ENCODE measurements at regions of chr17 and their contacts with region 1.

Region 1: DNA sequence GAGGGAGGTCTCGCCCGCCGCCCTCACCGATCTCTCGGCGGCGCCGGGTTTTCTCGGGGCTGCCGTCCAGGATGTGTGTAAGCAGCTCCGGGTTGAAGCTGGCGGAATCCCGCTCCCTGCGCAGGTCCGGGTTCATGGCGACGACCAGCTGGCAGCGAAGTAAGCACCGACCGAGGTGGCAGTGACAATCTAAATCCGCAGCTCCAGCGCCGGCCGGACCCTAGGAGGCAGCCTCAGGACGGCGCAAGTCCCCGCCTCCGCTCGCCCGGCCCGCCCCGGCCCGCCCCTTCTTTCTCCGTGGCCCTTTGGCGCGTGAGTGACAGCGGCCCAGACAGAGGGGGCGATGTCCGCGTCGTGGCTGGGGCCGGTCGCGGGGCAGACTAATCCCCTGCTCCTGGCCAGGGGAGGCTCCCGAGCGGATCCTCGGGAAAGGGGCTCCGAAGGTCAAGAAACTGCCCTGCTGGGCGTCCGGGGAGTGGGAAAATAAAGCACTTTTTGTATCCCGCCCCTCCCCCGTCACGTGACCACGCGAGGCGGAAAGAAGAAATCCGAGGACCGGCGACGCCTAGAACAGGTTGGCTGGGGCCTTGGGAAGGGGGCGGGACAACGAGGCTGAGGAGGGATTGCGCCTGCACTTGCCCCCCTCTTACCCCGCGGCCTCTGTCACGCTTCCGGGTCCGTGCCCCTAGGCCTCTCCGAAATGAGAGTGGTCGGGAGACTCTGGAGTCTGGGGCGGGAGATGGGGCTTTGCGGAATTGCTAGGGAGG is at the starts of genes ACOX1 and TEN1:
- DNase-seq: peak; percentile 91 to 96
- H3K4me3 ChIP-seq: peak within 1 kb of the TSS; percentile 82
- H3K27ac ChIP-seq: peak within 1 kb of the TSS; percentile 87
- H3K4me1 ChIP-seq: peaks cover 63% of the 10 kb centered on the region
- H3K27me3 ChIP-seq: no peaks in the 10 kb centered on the region
- CTCF ChIP-seq: peak; percentile 21; the same call in 1 of the 2 replicates
- total RNA-seq, gene ACOX1: 35.5 and 37.1 TPM in 2 replicates
- total RNA-seq, gene TEN1: 19.6 and 22.7 TPM in 2 replicates

Region 2: DNA sequence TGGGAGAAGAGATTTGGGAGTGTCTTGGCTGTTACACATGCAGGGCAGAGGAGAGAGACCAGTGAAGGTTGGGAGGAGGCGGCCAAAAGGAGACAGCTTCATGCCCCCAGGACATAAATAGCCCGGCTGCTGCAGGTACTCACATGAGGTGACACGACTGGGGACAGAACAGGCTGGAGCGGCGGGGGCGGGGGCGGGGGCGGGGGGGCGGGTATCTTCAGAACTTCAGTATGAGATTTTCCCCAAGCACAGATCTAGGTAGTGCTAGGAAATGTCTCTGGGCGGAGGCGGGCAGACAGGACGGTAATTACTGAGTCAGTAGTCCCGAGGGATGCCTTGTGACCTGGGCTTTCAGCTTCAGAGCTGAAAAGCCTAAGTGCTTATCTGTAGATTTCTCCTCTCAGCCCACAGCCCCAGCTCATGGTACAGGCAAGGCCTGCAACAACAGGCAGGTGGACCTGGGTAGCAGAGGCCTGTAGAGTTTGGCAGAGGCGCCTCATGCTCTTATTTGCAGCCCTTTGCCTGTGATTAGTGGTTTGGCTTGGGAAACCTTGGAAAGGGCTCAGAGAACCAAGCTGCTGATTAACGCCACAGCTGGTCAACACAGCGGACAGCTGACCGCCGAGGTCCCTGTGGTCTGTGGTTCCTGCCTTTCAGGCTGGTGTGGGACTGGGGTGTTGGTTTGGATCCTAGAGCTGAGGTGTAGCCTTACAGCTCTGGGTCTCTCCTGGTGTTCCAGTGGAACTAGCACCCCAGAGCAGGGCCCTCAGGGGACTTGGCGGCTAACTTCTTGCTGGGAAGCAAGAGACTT is 170.0 kb before region 1 on chr17:
- CTCF ChIA-PET with region 1: no interaction called
- POLR2A ChIA-PET with region 1: no interaction called
- intact Hi-C with region 1: no loop called
- DNase-seq: no peak
- H3K4me3 ChIP-seq: no peak overlapping the region
- H3K27ac ChIP-seq: no peak overlapping the region
- H3K4me1 ChIP-seq: no peaks in the 10 kb centered on the region
- H3K27me3 ChIP-seq: no peaks in the 10 kb centered on the region
- CTCF ChIP-seq: no peak

Region 3: DNA sequence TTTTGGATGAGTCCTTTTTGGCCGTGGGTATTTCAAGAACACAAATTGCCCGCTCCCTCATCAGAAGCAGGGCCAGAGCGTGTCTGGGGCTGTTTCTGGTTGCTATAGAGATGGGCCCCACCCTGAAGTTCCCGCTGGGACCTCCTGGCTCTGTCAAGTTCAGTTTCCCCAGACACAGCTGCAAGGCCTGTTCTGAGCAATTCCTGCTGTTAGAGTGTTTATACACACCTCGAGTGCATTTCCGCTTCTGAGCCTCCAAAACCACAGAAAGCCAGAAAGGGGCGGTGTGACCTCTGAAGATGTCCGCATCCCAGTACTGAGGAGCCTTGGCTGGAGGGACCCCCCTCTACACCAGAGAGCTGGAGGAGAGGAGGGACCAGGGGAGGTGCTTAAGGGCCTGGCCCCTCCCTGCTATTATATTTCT is 114.7 kb before region 1 on chr17:
- CTCF ChIA-PET with region 1: interaction called, 10 read pairs
- POLR2A ChIA-PET with region 1: no interaction called
- intact Hi-C with region 1: no loop called
- DNase-seq: no peak
- H3K4me3 ChIP-seq: no peak overlapping the region
- H3K27ac ChIP-seq: no peak overlapping the region
- H3K4me1 ChIP-seq: peaks cover 2% of the 10 kb centered on the region; the same call in 1 of the 2 replicates
- H3K27me3 ChIP-seq: no peaks in the 10 kb centered on the region
- CTCF ChIP-seq: no peak

Region 4: DNA sequence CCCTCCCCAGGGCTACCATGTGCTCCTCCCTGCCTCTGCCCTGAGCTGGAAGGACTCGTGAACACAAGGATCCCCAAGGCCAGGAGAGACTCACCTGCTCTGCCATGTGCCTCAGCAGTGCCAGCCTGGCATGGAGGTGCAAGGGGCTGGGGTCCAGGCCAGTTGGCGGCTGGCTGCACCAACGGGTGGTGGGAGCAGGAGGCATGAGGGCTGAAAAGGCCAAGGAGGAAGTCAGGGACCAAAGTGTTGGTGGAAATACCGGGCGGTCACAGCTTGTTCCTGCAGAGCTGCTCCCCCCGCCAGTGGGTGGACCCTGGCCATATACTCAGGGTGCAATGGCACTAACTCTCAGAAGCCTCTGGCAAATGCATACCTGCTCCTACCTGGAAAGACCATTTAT is 67.0 kb before region 1 on chr17:
- CTCF ChIA-PET with region 1: no interaction called
- POLR2A ChIA-PET with region 1: no interaction called
- intact Hi-C with region 1: no loop called
- DNase-seq: no peak
- H3K4me3 ChIP-seq: no peak overlapping the region
- H3K27ac ChIP-seq: no peak overlapping the region
- H3K4me1 ChIP-seq: no peaks in the 10 kb centered on the region
- H3K27me3 ChIP-seq: no peaks in the 10 kb centered on the region
- CTCF ChIP-seq: no peak

Region 5: DNA sequence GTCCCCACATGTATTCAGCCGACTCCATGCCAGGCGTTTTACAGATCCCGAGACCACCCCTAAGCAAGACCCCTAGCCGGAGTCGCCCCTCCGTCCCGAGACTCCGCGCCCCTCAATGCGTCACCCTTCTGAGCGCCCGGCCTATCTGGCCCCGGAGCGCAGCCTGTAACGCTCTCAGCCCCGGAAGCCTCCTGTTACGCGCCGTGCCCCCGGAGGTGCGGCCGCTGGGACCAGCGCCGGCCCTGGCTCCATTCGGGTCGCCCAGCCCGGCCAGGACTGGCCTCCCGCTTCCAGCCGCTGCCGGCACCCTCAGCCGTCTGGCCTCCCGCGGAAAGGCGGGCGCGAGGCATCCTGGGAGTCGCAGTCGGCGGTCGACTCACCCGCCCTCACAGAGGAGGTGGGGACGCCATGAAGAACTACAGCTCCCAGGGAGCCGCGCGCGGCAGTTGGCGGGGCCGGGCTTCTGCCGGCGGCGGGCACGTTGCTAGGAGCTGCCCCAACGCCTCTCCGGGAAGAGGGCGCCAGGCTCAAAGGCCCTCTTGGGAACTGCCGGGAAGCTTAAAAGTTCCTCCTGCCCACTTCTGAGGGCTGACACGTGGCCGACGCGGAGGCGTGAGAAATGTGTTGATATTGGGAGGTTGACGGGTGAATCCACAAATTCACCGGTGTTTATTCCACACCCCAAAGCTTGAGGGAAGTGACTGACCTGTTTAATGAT is 38.2 kb before region 1 on chr17 and contains the start of gene FBF1:
- CTCF ChIA-PET with region 1: no interaction called
- POLR2A ChIA-PET with region 1: no interaction called
- intact Hi-C with region 1: loop called (anchors 2 kb)
- DNase-seq: peak; percentile 90 to 96
- H3K4me3 ChIP-seq: peak within 1 kb of the TSS; percentile 89
- H3K27ac ChIP-seq: no peak within 1 kb of the TSS; the same call in 1 of the 2 replicates
- H3K4me1 ChIP-seq: peaks cover 6% of the 10 kb centered on the region
- H3K27me3 ChIP-seq: no peaks in the 10 kb centered on the region
- CTCF ChIP-seq: no peak
- total RNA-seq, gene FBF1: 22.5 and 28.7 TPM in 2 replicates

Region 6: DNA sequence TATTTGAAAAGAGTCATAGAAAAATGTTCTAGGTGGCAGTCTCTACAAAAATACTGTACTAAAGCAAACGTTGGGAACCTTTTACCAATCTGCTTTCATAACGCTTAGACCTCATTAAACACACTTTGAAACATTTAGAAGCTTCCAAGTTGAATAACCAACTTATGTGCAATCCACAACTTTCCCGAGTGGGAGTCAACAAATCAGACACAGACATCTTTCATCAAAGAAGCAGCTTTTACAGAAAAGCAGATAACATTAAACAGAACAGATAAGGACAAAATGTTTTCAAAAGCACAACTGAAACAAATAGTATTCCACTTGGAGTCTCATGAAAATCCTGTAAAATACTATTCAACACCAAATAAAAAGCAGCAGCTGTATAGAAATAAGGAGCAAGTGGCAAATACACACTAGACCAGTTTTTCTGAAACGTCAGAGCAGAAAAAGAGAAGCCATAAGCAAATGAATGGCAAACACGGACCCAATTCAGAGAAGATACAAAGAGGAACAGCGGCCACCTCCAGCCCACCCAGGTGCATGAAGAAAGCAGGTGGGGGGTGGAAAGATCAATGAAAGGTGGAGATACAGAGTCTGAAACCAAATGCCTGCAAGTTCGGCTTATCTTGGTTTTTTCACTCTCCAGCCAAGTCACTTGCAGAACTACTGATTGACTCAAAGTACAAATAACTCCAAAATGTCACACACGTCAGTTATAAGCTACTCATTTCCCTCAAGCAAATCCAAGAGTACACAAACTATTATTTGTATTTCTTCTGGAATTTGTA is 19.9 kb before region 1 on chr17:
- CTCF ChIA-PET with region 1: no interaction called
- POLR2A ChIA-PET with region 1: no interaction called
- intact Hi-C with region 1: no loop called
- DNase-seq: no peak
- H3K4me3 ChIP-seq: no peak overlapping the region
- H3K27ac ChIP-seq: no peak overlapping the region
- H3K4me1 ChIP-seq: no peaks in the 10 kb centered on the region
- H3K27me3 ChIP-seq: no peaks in the 10 kb centered on the region
- CTCF ChIP-seq: no peak

Region 7: DNA sequence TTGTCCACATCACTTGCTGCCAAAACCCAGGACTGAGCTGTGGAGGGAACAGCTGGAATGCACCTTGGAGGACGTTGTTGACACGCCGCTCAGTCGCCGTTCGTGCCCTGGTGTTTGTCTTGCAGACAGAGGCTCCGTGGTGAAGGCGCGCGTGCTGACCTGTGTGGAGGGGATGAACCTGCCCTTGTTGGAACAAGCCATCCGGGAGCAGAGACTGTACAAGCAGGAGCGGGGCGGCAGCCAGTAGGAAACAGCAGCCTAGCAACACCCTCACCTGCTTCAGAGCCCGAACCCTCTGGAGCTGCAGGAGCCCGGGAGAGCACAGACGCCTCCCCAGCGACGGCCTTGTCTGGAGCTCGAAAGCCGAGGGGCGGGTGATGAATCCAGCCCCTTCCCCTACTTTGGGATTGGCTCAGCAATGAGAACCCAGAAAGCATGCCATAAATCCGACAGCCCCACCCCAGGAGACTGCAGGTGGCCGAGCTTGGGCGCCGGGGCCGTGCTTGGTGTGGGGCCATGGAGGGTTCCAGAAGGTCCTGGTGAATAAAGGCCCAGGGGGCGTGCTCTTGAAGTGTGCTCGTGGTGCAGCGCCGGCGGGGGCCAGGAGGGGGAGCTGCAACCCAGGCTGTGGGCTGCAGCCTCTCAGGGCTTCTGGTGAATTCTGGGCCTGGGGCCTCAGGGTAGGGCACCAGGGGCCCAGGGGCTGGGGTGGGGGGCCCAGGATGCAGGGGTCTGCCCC is 21.1 kb after region 1 on chr17:
- CTCF ChIA-PET with region 1: interaction called, 8 read pairs
- POLR2A ChIA-PET with region 1: interaction called, 3 read pairs
- intact Hi-C with region 1: loop called (anchors 1 kb)
- DNase-seq: peak in 1 of 2 experiments; percentile 52
- H3K4me3 ChIP-seq: no peak overlapping the region
- H3K27ac ChIP-seq: no peak overlapping the region
- H3K4me1 ChIP-seq: peaks cover 51% of the 10 kb centered on the region
- H3K27me3 ChIP-seq: no peaks in the 10 kb centered on the region
- CTCF ChIP-seq: peak; percentile 88

Region 8: GRCh38 chr17:76027159-76027839 is 48.2 kb after region 1 on chr17 and contains the start of gene EVPL:
- CTCF ChIA-PET with region 1: no interaction called
- POLR2A ChIA-PET with region 1: no interaction called
- intact Hi-C with region 1: loop called (anchors 2 kb)
- DNase-seq: peak; percentile 91 to 98
- H3K4me3 ChIP-seq: peak within 1 kb of the TSS; percentile 71
- H3K27ac ChIP-seq: peak within 1 kb of the TSS; percentile 47; the same call in 1 of the 2 replicates
- H3K4me1 ChIP-seq: peaks cover 25% of the 10 kb centered on the region
- H3K27me3 ChIP-seq: no peaks in the 10 kb centered on the region
- CTCF ChIP-seq: no peak
- total RNA-seq, gene EVPL: 60.8 and 77.8 TPM in 2 replicates

Measured in PC-9 (cell line).